HepG2 (cell line): ENCODE measurements at regions of chr20 and their contacts with region 1.

Region 1: GRCh38 chr20:43749734-43750294 is 23.0 kb upstream of the GTSF1L start:
- DNase-seq: peak; percentile 48
- ATAC-seq: peak; percentile 94
- H3K4me3 ChIP-seq: no peak overlapping the region
- H3K27ac ChIP-seq: no peak overlapping the region
- H3K4me1 ChIP-seq: no peaks in the 10 kb centered on the region
- H3K27me3 ChIP-seq: peaks cover 3 to 60% of the 10 kb centered on the region in 2 experiments; a peak in 3 of 5 replicates
- CTCF ChIP-seq: peak; percentile 99
- EP300 ChIP-seq: no peak
- POLR2A ChIP-seq: no peak
- RAD21 ChIP-seq: peak; percentile 98

Region 2: DNA sequence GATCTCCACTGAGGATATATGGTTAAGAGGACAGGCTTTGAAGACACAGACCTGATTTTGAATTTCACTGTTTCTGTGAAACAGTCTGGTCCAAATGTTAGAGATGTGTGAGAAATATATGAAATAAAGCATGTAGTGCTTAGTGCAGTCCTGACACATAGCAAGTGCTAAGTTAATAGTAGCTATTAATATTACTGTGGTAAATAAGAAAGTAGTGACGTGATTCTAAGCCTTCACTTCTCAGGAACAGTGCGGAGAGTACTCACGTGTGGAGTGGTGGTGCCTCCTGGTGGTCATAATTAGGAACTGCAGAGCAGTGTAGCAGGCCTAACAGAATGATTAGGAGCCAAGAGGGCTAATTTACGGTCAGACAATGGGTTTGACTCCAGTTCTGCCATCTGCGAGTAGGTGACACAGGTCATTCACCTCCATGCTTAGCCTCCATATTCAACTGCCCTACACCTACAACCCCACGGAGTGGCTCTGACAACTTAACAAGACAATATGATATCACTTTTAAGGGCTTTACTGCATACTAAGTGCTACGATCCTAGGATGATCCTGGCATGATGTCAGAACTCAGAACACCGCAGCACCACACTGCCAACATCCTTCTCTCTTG is 330.9 kb after region 1 on chr20:
- CTCF ChIA-PET with region 1: interaction called, 74 read pairs
- POLR2A ChIA-PET with region 1: no interaction called
- in situ Hi-C with region 1: loop called (anchors 5 kb)
- intact Hi-C with region 1: no loop called
- DNase-seq: peak; percentile 79
- ATAC-seq: peak; percentile 93
- H3K4me3 ChIP-seq: no peak overlapping the region
- H3K27ac ChIP-seq: no peak overlapping the region
- H3K4me1 ChIP-seq: no peaks in the 10 kb centered on the region
- H3K27me3 ChIP-seq: peaks cover 3 to 51% of the 10 kb centered on the region in 2 experiments; a peak in 4 of 5 replicates
- CTCF ChIP-seq: peak; percentile 99
- EP300 ChIP-seq: no peak
- POLR2A ChIP-seq: no peak
- RAD21 ChIP-seq: peak; percentile 95